Activated CD4-positive, alpha-beta memory T cell treated with anti-CD3 and anti-CD28 coated beads, Interleukin-2, amount 10 ng/mL, durations not matched to agents 7 days and 5 days (primary cell): ENCODE measurements at regions of chr4 and their contacts with region 1.

Region 1: DNA sequence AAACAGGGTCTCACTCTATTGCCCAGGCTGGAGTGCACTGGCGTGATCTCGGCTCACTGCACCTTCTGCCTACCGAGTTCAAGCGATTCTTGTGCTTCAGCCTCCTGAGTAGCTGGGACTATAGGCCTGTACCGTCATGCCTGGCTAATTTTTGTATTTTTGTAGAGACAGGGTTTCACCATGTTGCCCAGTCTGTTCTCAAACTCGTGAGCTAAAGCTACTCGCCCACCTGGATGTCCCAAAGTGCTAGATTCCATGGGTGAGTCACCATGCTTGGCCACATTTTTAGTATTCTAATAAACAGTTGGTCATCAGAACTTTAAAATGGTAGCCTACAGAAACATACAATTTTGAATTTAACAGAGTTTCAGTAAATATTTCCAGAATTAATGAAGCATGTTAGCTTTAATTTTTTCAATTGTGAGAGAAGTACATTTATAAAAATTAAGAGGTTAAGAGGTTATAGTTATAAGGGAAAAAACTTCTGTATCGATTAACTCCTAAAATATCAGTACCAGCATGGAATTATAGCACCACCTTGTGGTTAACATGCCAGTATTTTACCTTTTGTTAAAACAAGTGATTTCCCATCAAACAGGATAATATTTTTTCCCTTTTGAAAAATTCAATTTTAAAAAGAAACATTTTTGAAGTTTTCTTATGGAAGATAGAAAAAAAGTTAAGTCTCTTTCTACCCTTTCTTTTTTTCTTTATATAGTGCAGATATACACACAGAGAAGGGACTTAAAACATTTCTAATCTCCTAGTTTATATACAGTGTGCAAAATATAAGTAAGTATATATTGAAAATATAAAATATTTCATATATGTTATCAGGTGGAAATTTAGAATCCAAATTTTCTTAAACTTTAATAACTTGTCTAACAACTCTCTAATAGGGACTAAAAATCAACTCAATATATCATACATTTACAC is 35.4 kb downstream of the CEP44 start:
- DNase-seq: no peak
- H3K4me3 Mint-ChIP-seq: no peak overlapping the region
- H3K27ac Mint-ChIP-seq: no peak overlapping the region
- H3K4me1 Mint-ChIP-seq: no peaks in the 10 kb centered on the region
- H3K27me3 Mint-ChIP-seq: no peaks in the 10 kb centered on the region

Region 2: DNA sequence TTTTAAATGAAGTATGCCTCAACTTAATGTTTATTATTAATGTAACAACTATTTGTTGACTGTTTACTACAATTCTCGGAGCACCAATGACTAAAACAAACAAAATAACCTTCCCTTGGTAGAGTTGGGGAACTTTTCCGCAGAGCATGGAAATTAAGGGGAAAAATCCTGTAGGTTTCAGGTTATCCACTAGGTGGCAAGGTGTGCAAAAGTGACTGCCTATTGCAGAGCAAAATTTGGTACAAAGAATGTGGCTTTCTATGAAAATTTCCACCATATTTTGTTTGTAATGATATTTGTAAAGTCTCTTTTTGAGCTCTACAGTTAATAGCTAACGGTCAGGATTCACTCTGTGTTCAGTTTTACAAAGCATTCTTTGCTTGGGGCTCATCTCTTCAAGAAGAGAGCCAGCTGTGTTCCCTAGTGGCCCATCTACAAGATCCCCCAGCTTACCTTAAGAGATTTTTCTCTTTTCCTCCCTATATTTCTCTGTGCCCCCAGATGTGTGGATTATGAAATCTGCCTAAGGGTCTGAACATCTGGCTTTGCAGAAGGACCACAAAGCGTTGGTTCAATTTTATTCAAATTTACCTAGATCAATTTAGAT is 96.7 kb before region 1 on chr4:
- CTCF ChIA-PET with region 1: interaction called, 11 read pairs
- POLR2A ChIA-PET with region 1: no interaction called
- DNase-seq: no peak
- H3K4me3 Mint-ChIP-seq: no peak overlapping the region
- H3K27ac Mint-ChIP-seq: no peak overlapping the region
- H3K4me1 Mint-ChIP-seq: peaks cover 12% of the 10 kb centered on the region
- H3K27me3 Mint-ChIP-seq: peaks cover 51% of the 10 kb centered on the region